Heart right ventricle (tissue), 16 donors: ENCODE measurements at regions of chr3 and their contacts with region 1.

Region 1: GRCh38 chr3:194003125-194004057 is 132.6 kb upstream of the HES1 start:
- DNase-seq: peak; percentile 92
- ATAC-seq: peak; percentile 90 to 96 (median 94)
- H3K4me3 ChIP-seq: peak overlapping the region in 8 of 10 donors; percentile 26 to 52 (median 47)
- H3K27ac ChIP-seq: peak overlapping the region; percentile 23 to 85 (median 74)
- H3K4me1 ChIP-seq: peaks cover 13 to 48% (median 29%) of the 10 kb centered on the region in 9 donors
- H3K27me3 ChIP-seq: peaks cover 0 to 33% (median 8%) of the 10 kb centered on the region in 7 donors
- CTCF ChIP-seq: peak in 1 of 9 donors; percentile 21

Region 2: DNA sequence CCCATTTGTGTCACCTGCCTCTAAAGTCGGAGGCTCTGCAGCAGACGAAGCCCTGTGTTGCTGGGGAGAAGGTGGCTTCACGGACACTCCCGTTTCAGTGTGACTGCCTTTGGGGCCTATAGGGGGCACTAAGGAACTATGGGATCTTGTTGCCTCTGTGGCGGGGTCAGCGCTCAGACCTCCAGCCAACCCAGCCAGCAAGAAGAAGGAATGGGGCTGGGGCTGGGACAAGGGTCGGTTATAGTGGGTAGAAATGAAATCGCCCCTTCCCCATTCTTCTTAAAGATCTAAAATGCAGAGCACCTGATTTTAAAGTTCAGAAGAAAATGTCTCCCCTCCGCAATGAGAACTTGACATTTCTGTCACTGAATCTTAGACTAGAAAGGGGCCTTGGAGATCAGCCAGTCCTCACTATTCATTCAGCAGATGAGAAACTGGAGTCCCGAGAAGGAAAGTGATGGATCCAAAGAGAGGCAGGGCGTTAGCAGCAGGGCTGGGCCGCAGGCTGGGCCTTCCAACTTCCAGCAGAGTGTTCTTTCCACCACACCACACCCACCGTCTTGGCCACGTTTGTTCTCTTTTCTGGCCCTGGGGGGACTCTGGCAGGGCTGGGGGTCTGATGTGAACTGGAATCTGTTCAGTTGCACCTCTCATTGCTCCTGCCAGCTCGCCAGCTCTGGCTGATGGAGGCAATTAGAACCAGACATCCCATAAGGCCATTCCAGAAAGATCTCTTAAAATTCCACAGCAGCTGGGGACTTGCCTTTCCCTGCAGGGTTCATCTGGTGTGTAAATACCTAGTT is 215.0 kb before region 1 on chr3:
- intact Hi-C with region 1: loop called in 7 of 10 experiments (anchors 5 to 10 kb)
- DNase-seq: peak; percentile 51 to 76
- ATAC-seq: peak; percentile 87 to 97 (median 95)
- H3K4me3 ChIP-seq: no peak overlapping the region
- H3K27ac ChIP-seq: peak overlapping the region in 4 of 10 donors; percentile 6 to 39 (median 16)
- H3K4me1 ChIP-seq: peaks cover 7 to 22% (median 12%) of the 10 kb centered on the region in 9 donors
- H3K27me3 ChIP-seq: peaks cover 3 to 61% (median 50%) of the 10 kb centered on the region in 7 donors
- CTCF ChIP-seq: peak; percentile 63 to 94 (median 84)

Region 3: DNA sequence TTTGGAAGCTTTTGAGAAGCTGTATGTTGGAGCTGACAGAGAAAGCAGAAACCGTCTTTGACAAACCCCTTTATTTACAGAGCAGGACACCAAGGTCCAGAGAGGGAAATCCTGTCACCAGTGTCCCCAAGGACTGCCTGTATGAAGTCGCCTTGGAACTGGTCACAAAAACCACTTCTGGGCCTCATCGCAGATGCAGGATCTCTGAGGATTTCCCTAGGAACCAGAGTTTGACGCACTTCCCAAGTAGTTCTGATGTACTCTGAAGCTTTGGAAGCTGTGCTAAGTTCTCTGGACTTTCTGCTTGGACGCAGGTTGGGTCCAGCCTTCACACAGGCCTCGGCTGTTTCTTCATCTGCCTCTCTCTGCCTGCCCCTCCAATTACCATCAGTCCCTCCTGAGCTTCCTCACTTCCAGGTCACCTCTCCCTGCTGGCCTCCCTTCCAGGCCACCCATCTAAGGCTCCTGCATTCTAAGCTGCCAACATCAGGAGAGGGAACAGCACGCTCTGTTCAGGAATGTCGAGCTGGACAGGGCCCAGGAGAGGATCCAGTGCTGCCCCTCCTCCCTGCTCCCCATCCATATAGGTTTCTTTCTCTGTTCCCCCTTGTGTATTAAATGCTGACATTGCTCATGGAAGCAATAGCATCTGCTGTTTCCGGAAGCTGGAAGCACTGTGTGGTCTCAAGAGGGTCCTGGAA is 139.6 kb before region 1 on chr3:
- intact Hi-C with region 1: loop called in 1 of 10 experiments (anchors 5 kb)
- DNase-seq: peak; percentile 40 to 45
- ATAC-seq: peak; percentile 46 to 94 (median 76)
- H3K4me3 ChIP-seq: no peak overlapping the region
- H3K27ac ChIP-seq: peak overlapping the region in 8 of 10 donors; percentile 32 to 67 (median 43)
- H3K4me1 ChIP-seq: peaks cover 0 to 41% (median 34%) of the 10 kb centered on the region in 9 donors
- H3K27me3 ChIP-seq: peaks cover 0 to 3% (median under 1%) of the 10 kb centered on the region in 7 donors
- CTCF ChIP-seq: no peak

Region 4: GRCh38 chr3:194070634-194071409 is 67.4 kb after region 1 on chr3:
- intact Hi-C with region 1: loop called in 5 of 10 experiments (anchors 5 to 10 kb)
- DNase-seq: peak; percentile 84 to 89
- ATAC-seq: peak; percentile 87 to 93 (median 92)
- H3K4me3 ChIP-seq: peak overlapping the region; percentile 25 to 64 (median 53)
- H3K27ac ChIP-seq: peak overlapping the region; percentile 59 to 96 (median 91)
- H3K4me1 ChIP-seq: peaks cover 0 to 32% (median 18%) of the 10 kb centered on the region in 9 donors
- H3K27me3 ChIP-seq: peaks cover 0 to 38% (median 11%) of the 10 kb centered on the region in 7 donors
- CTCF ChIP-seq: peak in 1 of 9 donors; percentile 10

Region 5: DNA sequence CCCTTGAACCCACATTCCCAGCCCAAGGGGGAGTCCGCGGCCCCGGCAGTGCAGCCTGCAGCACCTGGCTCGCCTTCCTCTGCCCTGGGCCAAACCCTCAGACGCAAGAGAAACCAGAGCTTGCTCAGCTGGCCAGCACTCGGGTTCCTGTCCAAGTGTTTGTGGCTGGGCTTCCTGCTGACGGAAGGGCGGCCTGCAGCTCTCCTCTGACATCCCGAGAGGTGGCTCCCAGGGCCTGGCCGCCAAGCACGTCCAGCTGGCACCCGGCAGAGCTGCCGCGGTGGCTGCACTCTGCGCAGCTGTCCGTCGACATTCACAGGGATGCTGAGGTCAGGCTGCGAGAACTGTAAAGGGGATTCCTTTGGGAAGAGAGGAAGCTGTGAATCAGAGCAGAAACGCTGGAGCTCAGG is 262.1 kb after region 1 on chr3:
- intact Hi-C with region 1: loop called in 5 of 10 experiments (anchors 2 to 10 kb)
- DNase-seq: peak; percentile 92 to 94
- ATAC-seq: peak; percentile 78 to 88 (median 80)
- H3K4me3 ChIP-seq: peak overlapping the region in 2 of 10 donors; percentile 12 to 20
- H3K27ac ChIP-seq: peak overlapping the region in 9 of 10 donors; percentile 70 to 93 (median 85)
- H3K4me1 ChIP-seq: peaks cover 32 to 68% (median 60%) of the 10 kb centered on the region in 9 donors
- H3K27me3 ChIP-seq: no peaks in the 10 kb centered on the region
- CTCF ChIP-seq: no peak